HepG2 (cell line): ENCODE measurements at regions of chrX and their contacts with region 1.

Region 1: DNA sequence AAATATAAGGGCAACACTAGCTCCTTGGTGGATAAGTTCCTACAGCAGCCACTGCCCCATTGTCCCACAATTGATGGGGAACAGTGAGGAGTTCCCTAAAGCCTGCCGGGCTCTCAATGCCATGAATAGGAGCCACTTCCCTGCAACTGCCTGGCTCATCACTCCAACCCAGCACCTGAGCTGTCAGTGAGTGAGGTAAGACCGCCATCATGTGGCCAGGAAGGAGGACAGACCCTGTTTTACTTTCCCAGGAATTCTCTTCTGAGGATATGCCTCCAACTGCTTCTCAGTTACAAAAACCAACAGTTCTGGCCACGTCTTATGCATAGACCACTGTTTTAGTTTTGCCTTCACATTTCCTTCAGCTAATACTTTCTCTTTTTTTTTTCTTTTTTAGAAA is 45.5 kb downstream of the SRPX start:
- DNase-seq: peak; percentile 27
- ATAC-seq: peak; percentile 90
- H3K4me3 ChIP-seq: no peak overlapping the region
- H3K27ac ChIP-seq: no peak overlapping the region
- H3K4me1 ChIP-seq: no peaks in the 10 kb centered on the region
- H3K27me3 ChIP-seq: no peaks in the 10 kb centered on the region
- CTCF ChIP-seq: peak; percentile 86
- EP300 ChIP-seq: no peak
- POLR2A ChIP-seq: no peak
- RAD21 ChIP-seq: peak; percentile 68

Region 2: GRCh38 chrX:37491686-37492085 is 683.5 kb before region 1 on chrX:
- CTCF ChIA-PET with region 1: no interaction called
- POLR2A ChIA-PET with region 1: no interaction called
- in situ Hi-C with region 1: no loop called
- intact Hi-C with region 1: loop called (anchors 5 kb)
- DNase-seq: no peak
- ATAC-seq: no peak
- H3K4me3 ChIP-seq: no peak overlapping the region
- H3K27ac ChIP-seq: no peak overlapping the region
- H3K4me1 ChIP-seq: 0 out of 2 replicates have a peak, but pooled peaks cover 8% of the 10 kb centered on the region
- H3K27me3 ChIP-seq: no peaks in the 10 kb centered on the region
- CTCF ChIP-seq: no peak
- EP300 ChIP-seq: no peak
- POLR2A ChIP-seq: no peak
- RAD21 ChIP-seq: no peak

Region 3: GRCh38 chrX:37509349-37509748 is 665.8 kb before region 1 on chrX:
- CTCF ChIA-PET with region 1: no interaction called
- POLR2A ChIA-PET with region 1: no interaction called
- in situ Hi-C with region 1: loop called (anchors 25 kb)
- intact Hi-C with region 1: no loop called
- DNase-seq: no peak
- ATAC-seq: peak; percentile 61; the same call in 2 of the 3 replicates
- H3K4me3 ChIP-seq: no peak overlapping the region
- H3K27ac ChIP-seq: no peak overlapping the region
- H3K4me1 ChIP-seq: no peaks in the 10 kb centered on the region
- H3K27me3 ChIP-seq: no peaks in the 10 kb centered on the region
- CTCF ChIP-seq: peak; percentile 54
- EP300 ChIP-seq: no peak
- POLR2A ChIP-seq: no peak
- RAD21 ChIP-seq: no peak

Region 4: DNA sequence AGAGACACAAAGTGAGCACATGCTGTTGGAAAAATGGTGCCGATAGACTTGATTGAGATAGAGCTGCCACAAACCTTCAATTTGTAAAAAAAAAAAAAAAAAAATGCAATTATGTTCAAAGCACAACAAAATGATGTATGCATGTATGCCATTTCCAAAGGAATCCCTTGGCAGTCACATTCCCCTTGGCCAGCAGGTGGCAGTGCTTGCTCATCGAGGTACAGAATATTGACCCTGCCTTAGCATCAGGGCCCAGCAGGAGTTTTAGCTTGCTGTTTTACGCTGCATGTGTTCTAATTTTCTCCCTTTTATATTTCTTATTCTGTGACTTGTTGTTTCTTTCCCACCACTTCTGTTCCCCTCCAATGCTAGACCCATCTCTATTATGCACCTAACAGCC is 429.8 kb before region 1 on chrX:
- CTCF ChIA-PET with region 1: interaction called, 11 read pairs
- POLR2A ChIA-PET with region 1: no interaction called
- in situ Hi-C with region 1: loop called (anchors 10 kb)
- intact Hi-C with region 1: no loop called
- DNase-seq: peak; percentile 35
- ATAC-seq: peak; percentile 83
- H3K4me3 ChIP-seq: no peak overlapping the region
- H3K27ac ChIP-seq: no peak overlapping the region
- H3K4me1 ChIP-seq: no peaks in the 10 kb centered on the region
- H3K27me3 ChIP-seq: no peaks in the 10 kb centered on the region
- CTCF ChIP-seq: peak; percentile 75
- EP300 ChIP-seq: no peak
- POLR2A ChIP-seq: no peak
- RAD21 ChIP-seq: peak; percentile 35; the same call in 1 of the 2 replicates

Region 5: GRCh38 chrX:37926700-37927099 is 248.4 kb before region 1 on chrX:
- CTCF ChIA-PET with region 1: interaction called, 4 read pairs
- POLR2A ChIA-PET with region 1: no interaction called
- in situ Hi-C with region 1: no loop called
- intact Hi-C with region 1: loop called (anchors 2 kb)
- DNase-seq: peak; percentile 25
- ATAC-seq: peak; percentile 53; the same call in 2 of the 3 replicates
- H3K4me3 ChIP-seq: no peak overlapping the region
- H3K27ac ChIP-seq: no peak overlapping the region
- H3K4me1 ChIP-seq: no peaks in the 10 kb centered on the region
- H3K27me3 ChIP-seq: no peaks in the 10 kb centered on the region
- CTCF ChIP-seq: peak; percentile 59
- EP300 ChIP-seq: no peak
- POLR2A ChIP-seq: no peak
- RAD21 ChIP-seq: peak; percentile 70

Region 6: DNA sequence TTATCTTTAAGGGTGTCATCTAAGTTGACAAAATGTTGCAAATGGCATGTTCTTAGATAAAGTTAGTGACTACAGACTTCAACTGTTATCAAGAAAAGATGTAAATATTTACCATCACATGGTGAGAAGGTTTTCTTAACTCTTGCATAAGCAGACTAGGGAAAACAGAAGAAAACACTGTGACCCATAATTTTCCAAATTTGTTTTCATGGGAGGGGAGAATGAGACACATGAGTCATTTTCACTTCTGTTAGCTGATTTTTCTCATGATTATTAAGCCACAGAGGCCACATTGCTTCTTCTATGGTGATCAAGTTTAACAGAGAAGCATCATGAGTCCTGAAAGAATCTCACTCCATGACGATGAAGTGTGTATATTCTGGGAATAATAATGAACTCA is 199.0 kb before region 1 on chrX:
- CTCF ChIA-PET with region 1: no interaction called
- POLR2A ChIA-PET with region 1: no interaction called
- in situ Hi-C with region 1: no loop called
- intact Hi-C with region 1: no loop called
- DNase-seq: no peak
- ATAC-seq: no peak
- H3K4me3 ChIP-seq: no peak overlapping the region
- H3K27ac ChIP-seq: no peak overlapping the region
- H3K4me1 ChIP-seq: peaks cover 21% of the 10 kb centered on the region
- H3K27me3 ChIP-seq: no peaks in the 10 kb centered on the region
- CTCF ChIP-seq: no peak
- EP300 ChIP-seq: no peak
- POLR2A ChIP-seq: no peak
- RAD21 ChIP-seq: no peak